Naive thymus-derived CD8-positive, alpha-beta T cell (primary cell): ENCODE measurements at regions of chr20 and their contacts with region 1.

Region 1: GRCh38 chr20:31572701-31573554 is 32.2 kb upstream of the ID1 start:
- DNase-seq: peak; percentile 65 to 88 (median 82)
- ATAC-seq: peak; percentile 86 to 87
- H3K4me3 Mint-ChIP-seq: peak overlapping the region; percentile 84 to 93 (median 90)
- H3K27ac Mint-ChIP-seq: peak overlapping the region; percentile 85 to 94 (median 90)
- H3K4me1 Mint-ChIP-seq: peaks cover 6 to 35% (median 25%) of the 10 kb centered on the region in 4 donors
- H3K27me3 Mint-ChIP-seq: no peaks in the 10 kb centered on the region

Region 2: DNA sequence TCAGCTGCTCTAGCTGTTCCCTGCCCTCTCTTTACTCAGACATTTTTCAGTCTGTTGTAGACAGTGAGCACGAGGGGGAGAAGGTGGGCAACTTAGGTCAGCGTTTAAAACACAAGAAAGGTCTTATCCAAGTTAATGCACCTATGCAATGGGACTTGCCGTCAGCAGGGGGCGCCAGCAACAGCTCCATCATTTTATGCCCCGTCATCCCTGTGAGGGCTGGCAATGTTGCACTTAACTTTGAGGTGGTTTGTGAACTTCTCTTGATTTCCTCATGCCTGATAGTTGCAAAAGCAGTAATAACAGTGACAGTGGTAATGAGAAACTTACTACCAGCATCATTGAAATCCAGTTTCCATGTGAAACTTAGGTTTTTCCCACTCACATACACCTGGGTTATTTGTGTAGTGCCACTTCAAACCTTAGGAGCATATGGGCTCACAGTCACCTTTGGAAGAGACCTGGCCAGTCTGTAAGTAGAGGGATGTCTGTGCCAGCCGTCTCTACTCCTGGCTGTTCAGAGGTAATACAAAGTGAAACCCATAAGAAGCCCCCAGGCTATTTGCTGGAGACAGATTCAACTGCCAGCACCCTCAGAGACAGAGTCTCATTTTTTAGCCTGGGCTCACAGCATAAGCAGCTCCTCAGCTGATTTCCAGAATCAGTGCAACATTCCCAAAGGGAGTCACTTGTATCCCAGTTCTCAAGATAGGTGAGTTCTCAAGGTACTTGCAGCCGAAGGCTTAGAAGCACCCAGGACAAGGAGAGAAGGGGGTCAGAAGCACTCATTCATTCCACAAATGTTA is 12.6 kb before region 1 on chr20:
- POLR2A ChIA-PET with region 1: interaction called, 12 read pairs
- DNase-seq: peak; percentile 55 to 82 (median 74)
- ATAC-seq: peak; percentile 84 to 88
- H3K4me3 Mint-ChIP-seq: no peak overlapping the region
- H3K27ac Mint-ChIP-seq: peak overlapping the region in 5 of 10 donors; percentile 14 to 82 (median 71)
- H3K4me1 Mint-ChIP-seq: peaks cover 2 to 20% (median 11%) of the 10 kb centered on the region in 4 donors
- H3K27me3 Mint-ChIP-seq: no peaks in the 10 kb centered on the region

Region 3: GRCh38 chr20:31605031-31605901 is 32.3 kb after region 1 on chr20 and contains the start of gene ID1:
- POLR2A ChIA-PET with region 1: interaction called, 25 read pairs
- DNase-seq: peak; percentile 79 to 93 (median 86)
- ATAC-seq: peak; percentile 93 to 94
- H3K4me3 Mint-ChIP-seq: peak within 1 kb of the TSS; percentile 91 to 96 (median 93)
- H3K27ac Mint-ChIP-seq: peak within 1 kb of the TSS; percentile 43 to 93 (median 84)
- H3K4me1 Mint-ChIP-seq: peaks cover 15 to 34% (median 23%) of the 10 kb centered on the region in 4 donors
- H3K27me3 Mint-ChIP-seq: peaks cover 9 to 55% (median 23%) of the 10 kb centered on the region in 5 donors
- polyA plus RNA-seq, gene ID1: 0.29 to 0.87 (median 0.51) TPM